WTC11 (cell line): ENCODE measurements at regions of chr19 and their contacts with region 1.

Region 1: DNA sequence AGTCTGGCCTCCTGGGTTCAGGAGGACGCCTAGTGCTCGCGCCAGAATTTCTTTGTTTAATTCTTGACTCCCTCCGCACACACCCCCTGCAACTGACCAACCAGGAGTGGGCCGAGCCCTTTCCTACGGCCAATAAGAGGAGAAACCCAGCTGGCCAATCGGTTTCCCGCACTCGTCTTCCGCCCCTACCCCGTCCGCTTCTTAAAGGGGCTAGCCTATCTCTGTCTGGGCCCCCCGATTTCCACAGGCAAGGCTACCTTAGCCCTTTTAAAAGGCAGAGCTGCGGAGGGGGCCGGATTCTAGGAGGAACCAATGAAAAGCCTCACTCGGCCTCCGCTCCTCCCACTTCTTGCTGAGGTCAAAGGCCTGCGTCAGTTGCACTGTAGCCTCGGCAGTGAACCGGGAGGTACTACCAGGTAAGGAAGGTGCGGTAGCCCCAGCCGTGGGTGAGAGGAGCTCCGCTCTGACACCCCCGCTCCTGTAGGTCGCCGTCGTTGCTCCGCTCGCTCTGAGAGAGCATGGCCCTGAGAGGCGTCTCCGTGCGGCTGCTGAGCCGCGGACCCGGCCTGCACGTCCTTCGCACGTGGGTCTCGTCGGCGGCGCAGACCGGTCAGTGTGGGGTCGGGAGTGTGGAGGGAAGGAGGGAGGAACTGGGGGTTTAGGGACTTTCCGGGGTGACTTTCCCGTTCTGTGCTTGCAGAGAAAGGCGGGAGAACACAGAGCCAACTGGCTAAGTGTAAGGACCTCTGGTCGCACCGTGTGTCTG is at the start of gene GCDH:
- DNase-seq: peak; percentile 98
- ATAC-seq: peak; percentile 96
- H3K4me3 Mint-ChIP-seq: peak within 1 kb of the TSS; percentile 99
- H3K27ac Mint-ChIP-seq: peak within 1 kb of the TSS; percentile 96
- H3K4me1 Mint-ChIP-seq: peaks cover 22% of the 10 kb centered on the region
- H3K27me3 Mint-ChIP-seq: peaks cover 20% of the 10 kb centered on the region
- CTCF ChIP-seq: no peak
- total RNA-seq, gene GCDH: 58.6 to 69.0 TPM (median 59.8 TPM) in 3 replicates

Region 2: GRCh38 chr19:12872941-12873890 is 17.8 kb before region 1 on chr19:
- CTCF ChIA-PET with region 1: interaction called, 49 read pairs
- POLR2A ChIA-PET with region 1: interaction called, 18 read pairs
- DNase-seq: peak; percentile 89
- ATAC-seq: peak; percentile 86
- H3K4me3 Mint-ChIP-seq: peak overlapping the region; percentile 67
- H3K27ac Mint-ChIP-seq: no peak overlapping the region
- H3K4me1 Mint-ChIP-seq: no peaks in the 10 kb centered on the region; the same call in 1 of the 2 replicates
- H3K27me3 Mint-ChIP-seq: peaks cover 30% of the 10 kb centered on the region
- CTCF ChIP-seq: no peak

Region 3: DNA sequence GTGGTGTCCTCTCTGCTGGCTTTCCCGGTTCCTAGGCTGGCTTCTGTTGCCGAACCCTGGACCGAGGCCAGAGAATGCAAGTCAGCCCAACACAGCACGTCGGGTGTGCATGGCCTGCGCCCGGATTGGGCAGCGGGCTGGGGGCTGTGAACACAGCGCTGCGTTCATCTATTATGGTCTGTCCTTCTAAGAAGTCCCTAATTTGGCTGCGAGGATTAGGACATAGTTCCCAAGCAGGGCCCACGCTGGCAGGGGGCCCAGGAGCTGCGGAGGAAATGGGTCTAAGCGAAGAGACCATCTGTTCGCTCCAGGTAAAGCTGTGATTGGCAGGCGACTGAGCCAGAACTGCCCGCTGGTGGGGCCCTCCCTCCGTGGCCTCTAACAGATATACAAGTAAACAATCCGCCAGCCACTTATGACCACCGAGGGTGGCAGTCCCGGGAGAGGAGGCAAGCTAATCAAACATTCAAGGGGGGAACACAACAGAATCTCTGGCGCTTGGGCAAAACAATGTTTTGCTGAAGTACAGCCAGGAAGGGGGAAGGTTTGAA is 22.1 kb after region 1 on chr19:
- CTCF ChIA-PET with region 1: interaction called, 10 read pairs
- POLR2A ChIA-PET with region 1: interaction called, 9 read pairs
- DNase-seq: peak; percentile 67
- ATAC-seq: peak; percentile 80
- H3K4me3 Mint-ChIP-seq: peak overlapping the region; percentile 53
- H3K27ac Mint-ChIP-seq: peak overlapping the region; percentile 94
- H3K4me1 Mint-ChIP-seq: peaks cover 27% of the 10 kb centered on the region
- H3K27me3 Mint-ChIP-seq: peaks cover 10% of the 10 kb centered on the region
- CTCF ChIP-seq: no peak

Region 4: GRCh38 chr19:12938234-12939025 is 47.5 kb after region 1 on chr19 and contains the start of gene CALR:
- CTCF ChIA-PET with region 1: interaction called, 8 read pairs
- POLR2A ChIA-PET with region 1: interaction called, 12 read pairs
- DNase-seq: peak; percentile 99
- ATAC-seq: peak; percentile 90
- H3K4me3 Mint-ChIP-seq: peak within 1 kb of the TSS; percentile 99
- H3K27ac Mint-ChIP-seq: peak within 1 kb of the TSS; percentile 91
- H3K4me1 Mint-ChIP-seq: peaks cover 35% of the 10 kb centered on the region
- H3K27me3 Mint-ChIP-seq: no peaks in the 10 kb centered on the region
- CTCF ChIP-seq: no peak
- total RNA-seq, gene CALR: 977 to 1,088 TPM (median 978 TPM) in 3 replicates